Ascending aorta (tissue), 2 donors: ENCODE measurements at regions of chr2 and their contacts with region 1.

Region 1: DNA sequence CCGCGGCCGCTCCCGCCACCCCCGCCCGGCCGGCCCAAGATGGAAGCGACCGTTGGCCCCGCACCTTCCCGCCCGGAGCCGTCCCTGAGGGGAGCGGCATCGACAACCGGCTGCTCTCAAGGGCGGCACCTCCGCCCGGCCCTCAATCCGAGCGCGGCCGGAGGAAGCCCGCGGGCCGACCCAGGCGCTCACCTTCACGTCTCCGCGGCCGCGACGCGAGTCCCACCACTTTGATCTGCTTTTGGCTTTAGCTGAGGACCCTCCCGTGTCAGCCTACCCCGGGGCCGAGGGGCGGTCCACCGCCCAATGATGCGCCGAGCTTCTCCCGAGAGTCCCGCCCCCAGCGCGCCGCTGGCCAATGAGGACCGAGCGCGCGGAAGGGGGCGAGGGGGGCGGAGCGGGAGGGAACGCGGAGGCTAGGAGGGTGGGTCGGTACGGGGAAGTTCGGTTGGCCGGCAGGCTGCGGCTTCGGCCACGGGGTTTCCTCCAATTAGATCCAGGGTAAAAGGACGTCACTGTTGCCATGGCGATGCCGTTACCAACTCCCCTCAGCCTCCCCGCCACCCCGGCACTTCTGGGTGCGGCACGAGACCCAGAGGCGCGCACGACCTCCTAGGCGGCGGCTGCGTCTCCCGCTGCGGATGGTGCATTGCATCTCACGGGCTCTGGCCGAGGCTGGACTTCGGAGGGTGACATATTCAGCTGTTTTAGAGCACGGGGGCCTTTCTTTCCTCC is at the start of gene YWHAQ:
- DNase-seq: peak; percentile 97 to 100
- H3K4me3 ChIP-seq: peak within 1 kb of the TSS; percentile 79 to 95
- H3K27ac ChIP-seq: peak within 1 kb of the TSS; percentile 96 to 97
- H3K4me1 ChIP-seq: peaks cover 5 to 33% of the 10 kb centered on the region in 2 donors
- H3K27me3 ChIP-seq: no peaks in the 10 kb centered on the region
- CTCF ChIP-seq: no peak
- total RNA-seq, gene YWHAQ: 172 TPM

Region 2: DNA sequence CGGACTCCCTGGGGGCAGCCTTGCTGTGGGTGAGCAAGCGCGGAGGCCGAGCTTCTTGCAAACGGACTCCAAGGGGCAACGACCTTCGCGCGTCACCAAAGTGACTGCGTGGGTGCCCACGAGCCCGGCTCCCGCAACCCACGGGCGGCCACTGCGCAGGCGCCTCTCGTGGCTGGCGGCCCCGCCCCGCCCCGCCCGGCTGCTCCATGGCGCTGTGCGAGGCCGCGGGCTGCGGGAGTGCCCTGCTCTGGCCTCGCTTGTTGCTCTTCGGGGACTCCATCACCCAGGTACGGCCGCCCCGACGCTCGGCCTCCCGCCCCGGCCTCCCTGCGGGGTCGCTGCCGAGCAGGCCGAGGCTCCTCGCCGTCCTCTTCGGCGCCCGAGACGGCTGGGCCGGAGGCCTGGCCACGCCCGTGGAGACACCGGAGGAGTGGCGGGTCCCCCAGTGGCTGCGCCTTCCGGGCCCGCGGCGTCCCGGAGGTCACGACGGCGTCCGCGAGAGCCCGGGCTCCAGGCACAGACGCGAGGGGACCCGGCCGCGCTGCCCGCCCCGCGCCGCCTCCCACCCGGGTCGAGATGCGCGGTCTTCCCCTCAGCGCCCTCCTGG is 156.5 kb before region 1 on chr2 and contains the start of gene IAH1:
- intact Hi-C with region 1: loop called (anchors 2 kb)
- DNase-seq: peak in 1 of 2 donors; percentile 84
- H3K4me3 ChIP-seq: peak within 1 kb of the TSS; percentile 77 to 90
- H3K27ac ChIP-seq: peak within 1 kb of the TSS; percentile 86 to 94
- H3K4me1 ChIP-seq: peaks cover 0 to 16% of the 10 kb centered on the region in 2 donors
- H3K27me3 ChIP-seq: no peaks in the 10 kb centered on the region
- CTCF ChIP-seq: no peak
- total RNA-seq, gene IAH1: 86.0 TPM

Region 3: GRCh38 chr2:9613291-9613690 is 17.6 kb before region 1 on chr2:
- intact Hi-C with region 1: loop called (anchors 1 kb)
- DNase-seq: no peak
- H3K4me3 ChIP-seq: no peak overlapping the region
- H3K27ac ChIP-seq: peak overlapping the region in 1 of 2 donors; percentile 37
- H3K4me1 ChIP-seq: peaks cover 0 to 31% of the 10 kb centered on the region in 2 donors
- H3K27me3 ChIP-seq: no peaks in the 10 kb centered on the region
- CTCF ChIP-seq: no peak

Region 4: GRCh38 chr2:9757501-9758264 is 126.8 kb after region 1 on chr2:
- intact Hi-C with region 1: loop called (anchors 5 kb)
- DNase-seq: peak in 1 of 2 donors; percentile 79
- H3K4me3 ChIP-seq: peak overlapping the region; percentile 43 to 51
- H3K27ac ChIP-seq: peak overlapping the region; percentile 17
- H3K4me1 ChIP-seq: peaks cover 3 to 12% of the 10 kb centered on the region in 2 donors
- H3K27me3 ChIP-seq: no peaks in the 10 kb centered on the region
- CTCF ChIP-seq: no peak

Region 5: DNA sequence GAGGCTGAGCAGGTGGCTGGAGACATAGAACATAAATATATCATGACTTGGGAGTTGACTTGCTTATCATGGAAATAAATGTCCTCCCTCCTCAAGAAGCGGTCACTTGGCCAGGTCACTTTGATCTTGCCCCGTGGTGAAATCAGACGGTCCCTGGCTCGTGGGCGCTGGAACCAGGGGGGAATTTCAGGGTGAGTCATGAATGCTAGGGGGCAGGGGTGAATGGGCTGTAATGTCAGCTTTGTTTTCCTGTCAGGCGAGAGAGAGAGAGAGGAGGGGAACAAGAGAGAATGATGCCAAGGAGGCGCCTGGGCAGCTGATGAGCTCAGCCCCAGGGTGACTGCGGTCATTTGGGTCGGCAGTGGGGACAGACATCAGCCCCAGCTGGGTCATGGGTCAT is 539.3 kb after region 1 on chr2:
- intact Hi-C with region 1: no loop called
- DNase-seq: no peak
- H3K4me3 ChIP-seq: no peak overlapping the region
- H3K27ac ChIP-seq: no peak overlapping the region
- H3K4me1 ChIP-seq: no peaks in the 10 kb centered on the region
- H3K27me3 ChIP-seq: no peaks in the 10 kb centered on the region
- CTCF ChIP-seq: no peak